WTC11 (cell line): ENCODE measurements at regions of chr18 and their contacts with region 1.

Region 1: GRCh38 chr18:47397671-47398319 is 146.3 kb upstream of the SKOR2 start:
- DNase-seq: peak; percentile 73
- ATAC-seq: peak; percentile 87
- H3K4me3 Mint-ChIP-seq: no peak overlapping the region
- H3K27ac Mint-ChIP-seq: no peak overlapping the region
- H3K4me1 Mint-ChIP-seq: no peaks in the 10 kb centered on the region
- H3K27me3 Mint-ChIP-seq: peaks cover under 1% of the 10 kb centered on the region; the same call in 1 of the 2 replicates
- CTCF ChIP-seq: peak; percentile 74

Region 2: DNA sequence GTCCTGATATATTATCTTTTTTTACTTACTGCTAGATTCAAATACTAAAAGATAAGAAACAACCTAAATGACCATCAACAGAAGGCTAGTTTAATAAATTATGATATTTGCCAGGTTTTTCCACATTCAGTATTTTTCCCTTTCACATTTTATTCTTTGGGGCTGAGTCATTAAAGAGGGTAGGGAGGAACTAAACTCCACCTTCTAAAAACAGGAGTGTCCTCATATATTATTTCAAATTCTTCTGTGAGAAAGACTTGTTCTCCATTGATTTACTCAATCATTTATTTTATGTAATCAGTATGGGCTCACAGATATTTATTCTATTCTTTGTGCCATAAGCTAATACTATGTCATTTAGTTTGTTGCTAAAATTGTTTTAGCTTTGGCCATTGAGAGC is 256.5 kb before region 1 on chr18:
- CTCF ChIA-PET with region 1: no interaction called
- POLR2A ChIA-PET with region 1: no interaction called
- DNase-seq: no peak
- ATAC-seq: no peak
- H3K4me3 Mint-ChIP-seq: no peak overlapping the region
- H3K27ac Mint-ChIP-seq: no peak overlapping the region
- H3K4me1 Mint-ChIP-seq: no peaks in the 10 kb centered on the region
- H3K27me3 Mint-ChIP-seq: no peaks in the 10 kb centered on the region
- CTCF ChIP-seq: no peak

Region 3: GRCh38 chr18:47381975-47382570 is 15.7 kb before region 1 on chr18:
- CTCF ChIA-PET with region 1: interaction called, 11 read pairs
- POLR2A ChIA-PET with region 1: no interaction called
- DNase-seq: no peak
- ATAC-seq: no peak
- H3K4me3 Mint-ChIP-seq: no peak overlapping the region
- H3K27ac Mint-ChIP-seq: no peak overlapping the region
- H3K4me1 Mint-ChIP-seq: peaks cover 3% of the 10 kb centered on the region; the same call in 1 of the 2 replicates
- H3K27me3 Mint-ChIP-seq: no peaks in the 10 kb centered on the region; the same call in none of the 2 replicates
- CTCF ChIP-seq: no peak

Region 4: DNA sequence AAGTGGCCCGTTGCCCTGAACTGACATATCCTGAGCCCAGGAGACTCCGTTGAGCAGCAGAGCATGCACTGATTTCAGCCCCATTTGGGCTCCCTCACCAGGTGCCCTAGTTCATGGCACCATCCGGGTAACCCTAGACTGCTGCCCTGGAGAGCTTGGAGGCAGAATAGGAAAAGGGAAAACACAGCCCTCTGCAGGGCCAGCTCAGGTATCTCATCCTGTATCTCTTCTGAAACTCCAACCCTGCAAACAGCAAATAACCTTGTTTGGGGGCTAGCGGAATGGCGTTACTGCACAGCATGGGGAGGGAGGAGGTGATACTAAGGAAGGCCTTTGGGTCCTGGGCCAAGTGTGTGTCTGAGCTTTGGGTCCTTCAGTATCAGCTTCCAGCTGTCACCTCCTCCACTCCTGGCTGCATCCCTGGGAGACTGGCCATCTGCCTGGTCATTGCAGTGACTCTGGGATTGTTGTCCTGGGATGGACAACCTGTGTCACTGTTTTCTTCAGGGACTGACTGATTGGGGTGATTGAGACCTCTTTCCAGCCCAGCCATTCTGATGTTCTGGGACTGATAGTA is 87.5 kb after region 1 on chr18:
- CTCF ChIA-PET with region 1: interaction called, 10 read pairs
- POLR2A ChIA-PET with region 1: no interaction called
- DNase-seq: peak; percentile 13
- ATAC-seq: peak; percentile 83
- H3K4me3 Mint-ChIP-seq: no peak overlapping the region
- H3K27ac Mint-ChIP-seq: no peak overlapping the region
- H3K4me1 Mint-ChIP-seq: peaks cover 4% of the 10 kb centered on the region
- H3K27me3 Mint-ChIP-seq: no peaks in the 10 kb centered on the region
- CTCF ChIP-seq: no peak

Region 5: DNA sequence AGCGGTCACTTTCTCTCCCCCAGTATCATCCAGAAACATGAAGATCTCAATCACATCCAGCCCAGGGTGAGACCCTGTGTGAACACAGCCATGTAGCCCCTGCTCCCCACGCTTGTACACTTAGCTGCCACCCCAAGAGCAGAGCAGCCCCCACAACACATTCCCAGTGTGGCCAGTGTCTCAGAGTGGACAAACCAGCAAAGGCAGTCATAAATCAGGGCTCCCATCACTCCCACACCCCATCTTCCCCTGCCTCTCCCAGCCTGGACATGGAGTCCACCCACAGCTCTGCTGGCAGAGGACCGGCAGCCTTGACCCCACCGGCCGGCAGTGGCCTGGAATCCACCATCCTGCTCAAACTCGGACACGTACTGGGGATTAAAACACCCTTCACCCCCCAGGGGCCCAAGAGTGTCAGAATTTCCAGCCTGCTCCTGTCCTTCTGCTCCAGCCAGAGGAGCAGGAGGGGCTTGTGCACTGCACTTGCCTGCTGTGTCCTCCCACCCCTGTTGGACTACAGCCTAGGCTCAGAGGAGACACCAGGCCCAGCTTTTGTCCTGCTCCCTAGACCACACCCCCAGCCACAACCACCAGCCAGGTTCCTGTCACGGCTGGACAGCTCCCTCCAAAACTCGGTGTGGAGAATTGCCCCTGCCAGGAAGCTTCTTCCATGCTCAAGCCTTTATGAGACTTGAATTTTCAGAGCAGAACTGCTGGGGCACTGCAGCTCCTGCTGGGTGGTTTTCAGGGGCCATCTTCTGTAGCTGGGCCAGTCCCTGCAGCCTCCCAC is 326.6 kb after region 1 on chr18:
- CTCF ChIA-PET with region 1: no interaction called
- POLR2A ChIA-PET with region 1: no interaction called
- DNase-seq: peak; percentile 30
- ATAC-seq: peak; percentile 65
- H3K4me3 Mint-ChIP-seq: no peak overlapping the region
- H3K27ac Mint-ChIP-seq: no peak overlapping the region
- H3K4me1 Mint-ChIP-seq: no peaks in the 10 kb centered on the region
- H3K27me3 Mint-ChIP-seq: no peaks in the 10 kb centered on the region; the same call in 1 of the 2 replicates
- CTCF ChIP-seq: no peak